Activated CD8-positive, alpha-beta T cell treated with anti-CD3 and anti-CD28 coated beads, Interleukin-2, amount 10 ng/mL, durations not matched to agents 7 days and 5 days (primary cell): ENCODE measurements at regions of chr1 and their contacts with region 1.

Region 1: DNA sequence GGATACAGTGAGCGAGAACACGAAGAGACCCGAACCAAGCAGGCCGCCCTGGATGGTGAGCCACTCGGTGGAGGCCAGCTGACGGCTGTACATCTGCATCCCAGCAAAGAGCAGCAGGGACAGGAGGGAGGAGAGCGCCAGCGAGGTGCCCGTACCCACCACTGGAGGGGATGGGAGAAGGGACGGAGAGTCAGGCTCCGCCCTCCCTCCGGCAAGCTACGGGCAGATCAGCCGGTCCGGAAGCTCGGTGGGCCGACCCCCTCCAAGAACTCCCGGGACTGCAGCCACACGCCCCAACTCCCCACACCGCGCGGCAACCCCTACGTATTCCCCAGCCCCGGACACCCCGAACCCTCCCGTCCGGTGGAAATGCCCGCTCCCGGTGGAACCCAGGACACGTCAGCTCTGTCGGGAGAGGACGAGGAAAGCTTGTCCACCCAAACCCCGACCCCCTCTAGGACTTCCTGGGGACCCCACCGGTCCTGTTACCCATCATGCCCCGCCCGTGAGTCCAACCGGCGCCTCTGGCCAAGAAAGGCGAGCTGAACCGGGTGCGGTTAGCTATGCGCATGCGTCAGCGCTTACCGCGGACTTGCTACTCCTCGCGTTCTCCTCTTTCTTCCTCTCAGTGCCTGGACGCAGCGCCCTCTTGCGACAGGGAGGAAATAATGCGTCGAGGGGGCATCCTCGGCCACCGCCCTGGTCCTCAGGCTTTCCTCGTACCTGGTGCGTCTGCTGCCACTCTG is at the start of gene KRTCAP2:
- DNase-seq: peak; percentile 97
- ATAC-seq: peak; percentile 84
- H3K4me3 Mint-ChIP-seq: peak within 1 kb of the TSS; percentile 96
- H3K27ac Mint-ChIP-seq: peak within 1 kb of the TSS; percentile 98
- H3K4me1 Mint-ChIP-seq: peaks cover 52% of the 10 kb centered on the region
- H3K27me3 Mint-ChIP-seq: no peaks in the 10 kb centered on the region
- total RNA-seq, gene KRTCAP2: 170 to 190 TPM

Region 2: GRCh38 chr1:155091071-155091709 is 81.7 kb before region 1 on chr1:
- CTCF ChIA-PET with region 1: interaction called, 166 read pairs
- POLR2A ChIA-PET with region 1: interaction called, 3 read pairs
- DNase-seq: peak; percentile 85
- ATAC-seq: peak; percentile 84
- H3K4me3 Mint-ChIP-seq: no peak overlapping the region
- H3K27ac Mint-ChIP-seq: no peak overlapping the region
- H3K4me1 Mint-ChIP-seq: peaks cover 9% of the 10 kb centered on the region
- H3K27me3 Mint-ChIP-seq: peaks cover 16% of the 10 kb centered on the region

Region 3: GRCh38 chr1:155135415-155136028 is 37.4 kb before region 1 on chr1 and contains the start of gene SLC50A1:
- CTCF ChIA-PET with region 1: interaction called, 41 read pairs
- POLR2A ChIA-PET with region 1: interaction called, 5 read pairs
- DNase-seq: peak; percentile 95
- ATAC-seq: peak; percentile 84
- H3K4me3 Mint-ChIP-seq: peak within 1 kb of the TSS; percentile 98
- H3K27ac Mint-ChIP-seq: peak within 1 kb of the TSS; percentile 99
- H3K4me1 Mint-ChIP-seq: peaks cover 47% of the 10 kb centered on the region
- H3K27me3 Mint-ChIP-seq: no peaks in the 10 kb centered on the region
- total RNA-seq, gene SLC50A1: 37.5 to 38.9 TPM

Region 4: GRCh38 chr1:155185351-155186066 is 12.6 kb after region 1 on chr1:
- CTCF ChIA-PET with region 1: interaction called, 11 read pairs
- POLR2A ChIA-PET with region 1: no interaction called
- DNase-seq: no peak
- ATAC-seq: no peak
- H3K4me3 Mint-ChIP-seq: no peak overlapping the region
- H3K27ac Mint-ChIP-seq: peak overlapping the region; percentile 6
- H3K4me1 Mint-ChIP-seq: peaks cover 11% of the 10 kb centered on the region
- H3K27me3 Mint-ChIP-seq: no peaks in the 10 kb centered on the region

Region 5: DNA sequence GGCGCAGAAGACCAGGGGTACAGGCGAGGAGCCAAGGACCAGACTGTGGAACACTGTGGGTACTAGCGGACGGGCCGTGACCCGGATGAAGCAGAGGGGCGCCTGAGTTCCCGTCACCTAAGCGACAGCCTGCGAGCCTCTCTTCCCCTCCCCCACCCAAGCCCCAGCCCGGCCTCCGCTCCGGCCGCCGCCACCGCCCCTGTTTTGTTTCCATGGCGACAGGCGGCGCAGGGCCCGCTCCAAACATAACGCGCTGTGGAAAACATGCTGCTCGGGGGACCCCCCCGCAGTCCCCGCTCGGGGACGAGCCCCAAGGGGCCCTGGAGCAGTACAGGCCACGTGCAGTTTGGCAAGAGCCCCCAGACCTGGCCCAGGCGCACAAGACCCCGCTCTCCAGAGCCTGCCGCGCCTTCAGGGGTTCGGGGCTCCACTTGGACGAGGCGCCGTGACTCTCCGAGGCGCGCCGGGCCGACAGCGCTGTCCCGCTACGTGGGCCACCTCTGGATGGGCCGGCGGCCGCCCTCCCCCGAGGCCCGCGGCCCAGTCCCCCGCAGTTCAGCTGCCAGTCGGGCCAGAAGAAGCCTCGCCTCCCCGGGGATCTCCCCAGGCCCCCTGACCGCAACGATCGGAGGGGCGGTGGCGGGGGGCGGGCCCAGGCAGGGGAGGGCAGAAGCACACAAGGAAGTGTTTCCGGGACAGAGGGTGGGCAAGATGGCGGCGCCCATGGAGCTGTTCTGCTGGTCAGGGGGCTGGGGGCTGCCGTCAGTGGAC is 35.8 kb after region 1 on chr1 and contains the start of gene MTX1:
- CTCF ChIA-PET with region 1: interaction called, 21 read pairs
- POLR2A ChIA-PET with region 1: interaction called, 4 read pairs
- DNase-seq: peak; percentile 91
- ATAC-seq: peak; percentile 75
- H3K4me3 Mint-ChIP-seq: peak within 1 kb of the TSS; percentile 90
- H3K27ac Mint-ChIP-seq: peak within 1 kb of the TSS; percentile 92
- H3K4me1 Mint-ChIP-seq: peaks cover 30% of the 10 kb centered on the region
- H3K27me3 Mint-ChIP-seq: no peaks in the 10 kb centered on the region
- total RNA-seq, gene MTX1: 43.0 to 46.3 TPM

Region 6: DNA sequence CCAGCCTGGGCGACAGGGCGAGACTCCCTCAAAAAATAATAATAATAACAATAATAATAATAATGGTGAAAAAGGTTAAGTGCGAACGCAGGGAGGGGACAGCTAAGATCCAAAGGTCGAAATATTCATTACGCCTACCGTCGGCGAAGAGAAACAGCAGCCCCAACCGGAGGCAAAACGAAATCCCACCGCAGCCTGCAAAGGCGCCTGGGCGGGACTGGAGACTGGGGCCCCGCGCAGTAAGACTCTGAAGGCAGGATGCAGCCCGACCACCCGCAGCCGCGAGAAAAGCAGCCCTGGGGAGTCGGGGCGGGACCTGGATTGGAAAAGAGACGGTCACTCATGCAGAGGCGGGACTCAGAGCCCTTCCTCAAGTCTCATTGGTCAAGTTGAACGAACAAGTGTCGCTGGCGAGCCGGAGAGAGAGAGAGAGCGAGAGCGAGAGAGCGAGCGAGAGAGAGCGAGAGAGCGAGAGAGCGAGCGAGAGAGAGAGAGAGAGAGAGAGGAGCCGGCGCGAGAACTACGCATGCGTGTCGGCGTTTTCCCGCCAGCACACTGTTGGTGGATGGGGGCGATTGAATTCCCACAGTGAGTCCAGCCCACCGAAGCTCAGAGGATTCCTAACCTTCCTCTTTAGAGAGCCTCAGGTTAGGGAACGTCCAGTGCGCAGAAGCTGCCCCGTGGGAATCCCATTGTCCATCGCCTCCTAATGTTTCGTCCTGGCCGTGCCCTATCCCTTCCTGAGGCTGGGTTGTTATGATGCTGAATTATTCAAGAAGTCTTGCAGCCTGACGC is 71.7 kb after region 1 on chr1:
- CTCF ChIA-PET with region 1: interaction called, 21 read pairs
- POLR2A ChIA-PET with region 1: interaction called, 3 read pairs
- DNase-seq: peak; percentile 100
- ATAC-seq: peak; percentile 97
- H3K4me3 Mint-ChIP-seq: peak overlapping the region; percentile 69
- H3K27ac Mint-ChIP-seq: peak overlapping the region; percentile 90
- H3K4me1 Mint-ChIP-seq: peaks cover 52% of the 10 kb centered on the region
- H3K27me3 Mint-ChIP-seq: peaks cover 2% of the 10 kb centered on the region